Endothelial cell of umbilical vein (primary cell): ENCODE measurements at regions of chr4 and their contacts with region 1.

Region 1: GRCh38 chr4:174214101-174214878 is 69.2 kb downstream of the FBXO8 start:
- DNase-seq: no peak
- H3K4me3 ChIP-seq: no peak overlapping the region
- H3K27ac ChIP-seq: no peak overlapping the region
- H3K4me1 ChIP-seq: peaks cover 12% of the 10 kb centered on the region
- H3K27me3 ChIP-seq: peaks cover 71 to 98% of the 10 kb centered on the region in 2 experiments
- CTCF ChIP-seq: no peak
- POLR2A ChIP-seq: no peak

Region 2: GRCh38 chr4:173091362-173091761 is 1122.9 kb before region 1 on chr4:
- CTCF ChIA-PET with region 1: no interaction called
- POLR2A ChIA-PET with region 1: no interaction called
- dilution Hi-C with region 1: no loop called
- intact Hi-C with region 1: no loop called
- DNase-seq: peak; percentile 19
- H3K4me3 ChIP-seq: no peak overlapping the region
- H3K27ac ChIP-seq: no peak overlapping the region
- H3K4me1 ChIP-seq: no peaks in the 10 kb centered on the region
- H3K27me3 ChIP-seq: no peaks in the 10 kb centered on the region
- CTCF ChIP-seq: no peak
- POLR2A ChIP-seq: no peak

Region 3: DNA sequence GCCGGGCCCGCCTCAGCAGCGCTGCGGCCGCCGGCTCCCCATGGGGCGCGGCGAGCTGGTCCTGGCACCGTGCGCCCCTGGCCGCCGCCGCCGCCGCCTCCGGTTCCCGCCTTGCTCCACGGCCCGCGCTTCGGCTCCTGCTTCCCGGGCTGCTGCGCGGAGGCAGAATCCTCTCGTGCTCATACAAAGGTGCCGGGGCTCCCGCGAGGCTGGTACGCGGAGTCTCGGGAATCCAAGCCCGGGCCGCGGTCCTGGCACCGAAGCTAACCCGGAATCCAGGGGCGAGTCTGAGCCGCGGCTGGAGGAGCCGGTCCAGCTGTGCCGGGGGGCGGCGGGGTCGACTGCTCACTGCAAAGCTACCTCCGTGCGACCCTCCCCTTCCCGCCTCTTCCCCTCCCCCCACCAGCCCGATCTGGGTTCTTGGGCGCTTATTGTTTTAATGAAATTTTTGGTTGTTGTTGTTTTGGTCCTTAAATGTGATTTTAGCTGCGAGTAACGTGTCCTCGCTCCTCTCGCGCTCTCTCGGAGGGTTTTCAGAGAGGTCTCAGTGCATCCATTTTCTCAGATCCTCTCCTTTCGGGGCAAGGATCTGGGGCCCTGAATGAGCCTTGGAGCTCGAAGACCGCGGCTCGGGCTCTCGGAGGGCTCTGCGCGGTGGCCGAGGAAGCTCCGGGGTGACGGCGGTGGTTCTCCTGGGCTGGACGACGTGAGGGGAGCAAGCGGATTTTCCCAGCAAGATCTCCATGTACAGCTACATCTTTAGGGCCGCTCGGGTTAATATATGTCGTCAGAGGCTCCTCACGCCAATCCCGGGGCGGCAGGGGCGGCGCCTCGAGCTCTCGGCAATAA is 684.6 kb before region 1 on chr4 and contains the start of gene HAND2:
- CTCF ChIA-PET with region 1: no interaction called
- POLR2A ChIA-PET with region 1: no interaction called
- dilution Hi-C with region 1: no loop called
- intact Hi-C with region 1: loop called (anchors 5 kb)
- DNase-seq: no peak
- H3K4me3 ChIP-seq: peak within 1 kb of the TSS in 1 of 3 experiments; percentile 14
- H3K27ac ChIP-seq: no peak within 1 kb of the TSS
- H3K4me1 ChIP-seq: peaks cover 3% of the 10 kb centered on the region
- H3K27me3 ChIP-seq: peaks cover 86 to 94% of the 10 kb centered on the region in 2 experiments
- CTCF ChIP-seq: no peak
- POLR2A ChIP-seq: no peak
- total RNA-seq, gene HAND2: not detected in 2 replicates

Region 4: GRCh38 chr4:173924561-173924960 is 289.7 kb before region 1 on chr4:
- CTCF ChIA-PET with region 1: no interaction called
- POLR2A ChIA-PET with region 1: no interaction called
- dilution Hi-C with region 1: no loop called
- intact Hi-C with region 1: no loop called
- DNase-seq: no peak
- H3K4me3 ChIP-seq: no peak overlapping the region
- H3K27ac ChIP-seq: no peak overlapping the region
- H3K4me1 ChIP-seq: no peaks in the 10 kb centered on the region
- H3K27me3 ChIP-seq: no peaks in the 10 kb centered on the region
- CTCF ChIP-seq: no peak
- POLR2A ChIP-seq: no peak